CD14-positive monocyte (primary cell): ENCODE measurements at regions of chr4 and their contacts with region 1.

Region 1: DNA sequence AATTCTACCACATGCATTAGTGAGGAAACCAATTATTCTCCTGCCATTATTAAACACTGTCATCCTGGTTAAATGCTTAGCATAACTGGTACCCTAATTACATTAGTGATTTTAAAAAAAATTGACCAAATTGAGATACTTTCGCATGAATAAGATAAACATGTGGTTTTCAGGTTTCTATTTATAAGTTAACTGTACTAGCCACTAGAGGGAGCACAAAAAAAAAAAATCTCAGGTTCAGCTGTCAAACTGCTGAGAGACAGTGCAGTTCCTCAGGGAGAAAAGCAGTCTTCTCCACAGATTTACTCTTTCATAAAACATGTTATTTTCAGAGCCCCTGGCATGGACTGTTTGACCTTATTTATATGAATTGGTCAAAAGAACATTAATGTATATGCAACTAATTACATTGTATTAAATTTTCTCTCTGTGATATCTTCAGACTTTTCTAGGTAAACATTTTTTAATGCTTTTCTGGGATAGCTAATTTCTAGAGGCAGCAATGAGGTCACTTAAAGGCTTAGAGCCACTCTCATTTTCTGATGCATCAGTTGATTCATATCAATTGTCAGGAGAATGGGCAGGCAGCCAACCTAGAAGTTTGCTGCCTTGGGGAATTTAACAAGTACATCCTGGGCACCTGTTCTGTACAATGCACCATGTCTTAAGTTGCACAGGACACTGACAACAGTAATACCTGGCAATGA is 167.5 kb downstream of the CDS1 start:
- DNase-seq: peak; percentile 18 to 56 (median 30)
- H3K4me3 ChIP-seq: no peak overlapping the region
- H3K4me3 Mint-ChIP-seq: no peak overlapping the region
- H3K27ac ChIP-seq: no peak overlapping the region
- H3K27ac Mint-ChIP-seq: no peak overlapping the region
- H3K4me1 ChIP-seq: peaks cover 22 to 29% of the 10 kb centered on the region in 2 donors
- H3K4me1 Mint-ChIP-seq: peaks cover 22% of the 10 kb centered on the region
- H3K27me3 ChIP-seq: no peaks in the 10 kb centered on the region
- H3K27me3 Mint-ChIP-seq: no peaks in the 10 kb centered on the region
- CTCF ChIP-seq: peak; percentile 89

Region 2: DNA sequence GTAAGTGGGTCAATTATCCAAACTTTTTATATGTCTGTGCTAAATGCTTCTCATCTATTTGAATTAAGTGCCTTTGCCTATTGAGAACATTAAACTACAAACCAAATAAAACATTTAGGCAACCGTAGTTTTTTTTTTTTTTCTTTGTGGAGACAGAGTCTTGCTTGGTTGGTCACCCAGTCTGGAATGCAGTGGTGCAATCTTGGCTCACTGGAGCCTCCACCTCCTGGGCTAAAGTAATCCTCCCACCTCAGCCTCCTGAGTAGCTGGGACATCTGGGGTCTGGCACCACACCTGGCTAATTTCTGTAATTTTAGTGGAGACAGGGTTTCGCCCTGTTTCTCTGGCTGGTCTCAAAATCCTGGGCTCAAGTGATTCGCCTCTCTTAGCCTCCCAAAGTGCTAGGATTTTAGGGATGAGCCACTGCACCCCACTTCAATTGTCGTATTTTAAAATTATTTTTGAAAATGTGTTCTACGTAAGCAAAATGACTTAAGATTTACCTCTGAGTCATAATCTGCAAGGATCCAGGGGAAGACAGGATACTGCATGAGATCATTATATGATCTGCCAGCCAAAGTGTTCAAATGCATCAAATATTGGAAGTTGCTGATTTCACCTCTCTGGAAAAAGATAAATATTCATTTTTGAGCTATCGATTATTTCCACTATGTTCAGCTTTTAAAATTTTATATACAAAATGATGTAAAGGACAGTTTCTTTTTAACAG is 41.8 kb before region 1 on chr4:
- intact Hi-C with region 1: loop called in 1 of 2 experiments (anchors 5 kb)
- DNase-seq: no peak
- H3K4me3 ChIP-seq: no peak overlapping the region
- H3K4me3 Mint-ChIP-seq: no peak overlapping the region
- H3K27ac ChIP-seq: no peak overlapping the region
- H3K27ac Mint-ChIP-seq: no peak overlapping the region
- H3K4me1 ChIP-seq: no peaks in the 10 kb centered on the region
- H3K4me1 Mint-ChIP-seq: no peaks in the 10 kb centered on the region
- H3K27me3 ChIP-seq: no peaks in the 10 kb centered on the region
- H3K27me3 Mint-ChIP-seq: no peaks in the 10 kb centered on the region
- CTCF ChIP-seq: no peak

Region 3: DNA sequence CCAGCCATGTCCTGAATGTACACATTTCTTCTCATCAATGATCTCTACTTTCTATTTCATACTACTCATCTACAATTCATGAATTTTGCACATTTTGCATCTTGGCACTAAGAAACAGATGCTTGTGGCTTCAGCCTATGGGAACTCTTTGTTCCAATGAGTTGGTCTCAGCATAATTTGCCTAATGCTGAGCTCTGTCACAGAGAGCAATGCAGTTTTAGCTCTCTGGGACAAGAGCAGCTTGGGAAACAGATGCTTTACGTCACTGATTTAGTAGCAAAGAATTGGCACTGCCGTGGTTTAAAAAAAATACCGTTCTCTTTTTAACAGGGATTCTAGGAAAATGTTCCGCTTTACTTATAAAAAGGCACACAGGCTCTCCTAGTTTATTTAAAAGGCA is 53.7 kb after region 1 on chr4:
- intact Hi-C with region 1: no loop called
- DNase-seq: no peak
- H3K4me3 ChIP-seq: no peak overlapping the region
- H3K4me3 Mint-ChIP-seq: no peak overlapping the region
- H3K27ac ChIP-seq: no peak overlapping the region
- H3K27ac Mint-ChIP-seq: no peak overlapping the region
- H3K4me1 ChIP-seq: no peaks in the 10 kb centered on the region
- H3K4me1 Mint-ChIP-seq: no peaks in the 10 kb centered on the region
- H3K27me3 ChIP-seq: no peaks in the 10 kb centered on the region
- H3K27me3 Mint-ChIP-seq: no peaks in the 10 kb centered on the region
- CTCF ChIP-seq: no peak

Region 4: GRCh38 chr4:84971319-84971932 is 221.0 kb after region 1 on chr4:
- intact Hi-C with region 1: loop called (anchors 5 kb)
- DNase-seq: peak; percentile 34 to 74 (median 58)
- H3K4me3 ChIP-seq: no peak overlapping the region
- H3K4me3 Mint-ChIP-seq: no peak overlapping the region
- H3K27ac ChIP-seq: no peak overlapping the region
- H3K27ac Mint-ChIP-seq: no peak overlapping the region
- H3K4me1 ChIP-seq: peaks cover 26 to 39% of the 10 kb centered on the region in 2 donors
- H3K4me1 Mint-ChIP-seq: peaks cover 28% of the 10 kb centered on the region
- H3K27me3 ChIP-seq: peaks cover 4 to 8% of the 10 kb centered on the region in 2 donors
- H3K27me3 Mint-ChIP-seq: peaks cover 4 to 8% (median 6%) of the 10 kb centered on the region in 3 donors
- CTCF ChIP-seq: peak; percentile 80